ENCODE measurements at regions of chr10 and their contacts with region 1.

Region 1: GRCh38 chr10:75235375-75236177 is at the start of gene COMTD1:
- DNase-seq: peak; percentile 100
- ATAC-seq: peak; percentile 59
- H3K4me3 ChIP-seq: peak within 1 kb of the TSS; percentile 72
- H3K27ac ChIP-seq: peak within 1 kb of the TSS; percentile 71
- H3K4me1 ChIP-seq: peaks cover 42% of the 10 kb centered on the region
- H3K27me3 ChIP-seq: no peaks in the 10 kb centered on the region
- CTCF ChIP-seq: peak; percentile 100
- total RNA-seq, gene COMTD1: 183 and 214 TPM in 2 replicates

Region 2: DNA sequence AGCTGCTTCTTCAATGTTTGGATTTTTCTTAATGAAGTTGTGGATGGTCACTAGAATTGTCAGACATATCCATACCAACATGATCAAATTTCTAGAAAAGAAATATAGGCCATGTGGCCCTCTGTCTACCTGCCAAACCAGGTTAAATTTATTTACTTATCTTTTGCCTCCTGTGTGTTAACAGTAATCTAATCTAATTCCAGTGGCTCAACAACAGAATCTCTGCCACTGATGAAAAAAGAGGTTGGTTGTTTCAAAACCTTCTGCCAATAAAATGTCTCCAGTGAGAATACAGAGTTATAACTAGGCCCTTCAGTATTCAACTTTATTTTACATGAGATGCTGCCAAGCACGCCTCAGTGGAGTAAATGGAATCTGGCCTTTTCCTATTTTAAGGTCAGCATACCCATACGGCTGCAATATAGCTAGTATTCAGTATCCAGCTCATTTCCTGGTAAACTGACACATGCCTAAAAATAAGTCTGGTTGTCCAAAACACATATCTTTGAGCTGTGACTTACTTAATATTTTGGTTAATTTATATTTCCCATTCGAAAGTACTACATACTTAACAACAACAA is 1101.2 kb before region 1 on chr10:
- CTCF ChIA-PET with region 1: no interaction called
- POLR2A ChIA-PET with region 1: interaction called, 25 read pairs
- intact Hi-C with region 1: no loop called
- DNase-seq: no peak
- ATAC-seq: no peak
- H3K4me3 ChIP-seq: no peak overlapping the region
- H3K27ac ChIP-seq: no peak overlapping the region
- H3K4me1 ChIP-seq: no peaks in the 10 kb centered on the region
- H3K27me3 ChIP-seq: no peaks in the 10 kb centered on the region
- CTCF ChIP-seq: no peak

Region 3: GRCh38 chr10:75111367-75111906 is 124.1 kb before region 1 on chr10 and contains the start of gene SAMD8:
- CTCF ChIA-PET with region 1: interaction called, 6 read pairs
- POLR2A ChIA-PET with region 1: interaction called, 4 read pairs
- intact Hi-C with region 1: loop called (anchors 1 kb)
- DNase-seq: peak; percentile 100
- ATAC-seq: peak; percentile 84
- H3K4me3 ChIP-seq: peak within 1 kb of the TSS; percentile 74
- H3K27ac ChIP-seq: peak within 1 kb of the TSS; percentile 64
- H3K4me1 ChIP-seq: peaks cover 25% of the 10 kb centered on the region
- H3K27me3 ChIP-seq: no peaks in the 10 kb centered on the region
- CTCF ChIP-seq: peak; percentile 50
- total RNA-seq, gene SAMD8: 47.4 and 48.6 TPM in 2 replicates

Region 4: GRCh38 chr10:75165684-75166622 is 69.6 kb before region 1 on chr10:
- CTCF ChIA-PET with region 1: no interaction called
- POLR2A ChIA-PET with region 1: no interaction called
- intact Hi-C with region 1: no loop called
- DNase-seq: no peak
- ATAC-seq: peak; percentile 42
- H3K4me3 ChIP-seq: no peak overlapping the region
- H3K27ac ChIP-seq: no peak overlapping the region
- H3K4me1 ChIP-seq: no peaks in the 10 kb centered on the region
- H3K27me3 ChIP-seq: no peaks in the 10 kb centered on the region
- CTCF ChIP-seq: no peak

Region 5: GRCh38 chr10:75202321-75203045 is 33.1 kb before region 1 on chr10:
- CTCF ChIA-PET with region 1: interaction called, 11 read pairs
- POLR2A ChIA-PET with region 1: no interaction called
- intact Hi-C with region 1: no loop called
- DNase-seq: peak; percentile 86
- ATAC-seq: peak; percentile 95
- H3K4me3 ChIP-seq: no peak overlapping the region
- H3K27ac ChIP-seq: peak overlapping the region; percentile 27
- H3K4me1 ChIP-seq: peaks cover 26% of the 10 kb centered on the region
- H3K27me3 ChIP-seq: no peaks in the 10 kb centered on the region
- CTCF ChIP-seq: no peak

Region 6: GRCh38 chr10:75294866-75295701 is 59.5 kb after region 1 on chr10:
- CTCF ChIA-PET with region 1: interaction called, 10 read pairs
- POLR2A ChIA-PET with region 1: no interaction called
- intact Hi-C with region 1: no loop called
- DNase-seq: peak; percentile 99
- ATAC-seq: peak; percentile 90
- H3K4me3 ChIP-seq: peak overlapping the region; percentile 66
- H3K27ac ChIP-seq: peak overlapping the region; percentile 6
- H3K4me1 ChIP-seq: peaks cover 19% of the 10 kb centered on the region
- H3K27me3 ChIP-seq: no peaks in the 10 kb centered on the region; the same call in 1 of the 2 replicates
- CTCF ChIP-seq: peak; percentile 65

Region 7: GRCh38 chr10:76309070-76309469 is 1073.5 kb after region 1 on chr10:
- CTCF ChIA-PET with region 1: no interaction called
- POLR2A ChIA-PET with region 1: interaction called, 10 read pairs
- intact Hi-C with region 1: no loop called
- DNase-seq: no peak
- ATAC-seq: no peak
- H3K4me3 ChIP-seq: no peak overlapping the region
- H3K27ac ChIP-seq: no peak overlapping the region
- H3K4me1 ChIP-seq: peaks cover 1% of the 10 kb centered on the region; the same call in 1 of the 2 replicates
- H3K27me3 ChIP-seq: no peaks in the 10 kb centered on the region
- CTCF ChIP-seq: no peak